WTC11 (cell line): ENCODE measurements at regions of chr12 and their contacts with region 1.

Region 1: GRCh38 chr12:131159660-131160059 is 206.0 kb downstream of the ADGRD1 start:
- DNase-seq: no peak
- ATAC-seq: peak; percentile 94
- H3K4me3 Mint-ChIP-seq: no peak overlapping the region
- H3K27ac Mint-ChIP-seq: no peak overlapping the region
- H3K4me1 Mint-ChIP-seq: 0 out of 2 replicates have a peak, but pooled peaks cover 3% of the 10 kb centered on the region
- H3K27me3 Mint-ChIP-seq: no peaks in the 10 kb centered on the region
- CTCF ChIP-seq: 0 out of 2 replicates have a peak, but pooled peaks have one; percentile 24

Region 2: DNA sequence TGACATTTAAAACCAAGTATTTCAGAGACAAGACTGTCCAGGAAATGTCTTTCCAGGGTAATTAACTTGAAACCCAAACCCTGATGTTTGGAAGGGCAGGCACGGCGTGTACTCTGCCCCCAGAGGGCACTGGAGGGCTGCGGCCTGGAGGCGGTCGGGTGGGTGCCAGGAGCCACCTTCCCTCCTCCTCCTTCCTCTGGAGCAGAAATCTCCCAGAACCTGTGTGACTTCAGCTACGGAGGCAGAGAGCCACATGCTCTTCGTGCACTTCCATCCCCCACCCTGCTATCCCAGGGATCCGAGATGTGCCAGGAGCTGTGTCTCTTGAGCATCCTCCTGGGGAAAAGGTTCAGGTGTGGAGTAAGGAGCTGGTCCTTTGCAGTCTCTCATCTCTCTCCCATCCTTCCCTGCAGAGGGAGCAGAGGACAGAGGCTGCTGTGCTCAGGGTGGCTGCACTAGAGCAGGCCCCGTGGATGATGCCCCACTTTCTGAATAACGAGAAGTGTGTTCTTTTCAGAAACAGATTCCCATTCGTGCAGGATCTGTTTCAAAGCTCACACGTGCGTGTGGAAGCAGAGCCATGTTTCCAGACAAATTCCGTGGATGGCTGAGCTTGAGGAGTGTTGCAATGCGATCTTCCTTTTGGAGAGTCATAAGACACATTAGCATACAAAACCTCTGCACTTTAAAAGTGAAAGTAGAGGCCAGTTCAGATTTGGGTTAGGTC is 43.1 kb before region 1 on chr12:
- CTCF ChIA-PET with region 1: interaction called, 13 read pairs
- POLR2A ChIA-PET with region 1: no interaction called
- DNase-seq: peak; percentile 64
- ATAC-seq: peak; percentile 85
- H3K4me3 Mint-ChIP-seq: no peak overlapping the region
- H3K27ac Mint-ChIP-seq: no peak overlapping the region
- H3K4me1 Mint-ChIP-seq: peaks cover 13% of the 10 kb centered on the region
- H3K27me3 Mint-ChIP-seq: 0 out of 2 replicates have a peak, but pooled peaks cover 4% of the 10 kb centered on the region
- CTCF ChIP-seq: no peak

Region 3: DNA sequence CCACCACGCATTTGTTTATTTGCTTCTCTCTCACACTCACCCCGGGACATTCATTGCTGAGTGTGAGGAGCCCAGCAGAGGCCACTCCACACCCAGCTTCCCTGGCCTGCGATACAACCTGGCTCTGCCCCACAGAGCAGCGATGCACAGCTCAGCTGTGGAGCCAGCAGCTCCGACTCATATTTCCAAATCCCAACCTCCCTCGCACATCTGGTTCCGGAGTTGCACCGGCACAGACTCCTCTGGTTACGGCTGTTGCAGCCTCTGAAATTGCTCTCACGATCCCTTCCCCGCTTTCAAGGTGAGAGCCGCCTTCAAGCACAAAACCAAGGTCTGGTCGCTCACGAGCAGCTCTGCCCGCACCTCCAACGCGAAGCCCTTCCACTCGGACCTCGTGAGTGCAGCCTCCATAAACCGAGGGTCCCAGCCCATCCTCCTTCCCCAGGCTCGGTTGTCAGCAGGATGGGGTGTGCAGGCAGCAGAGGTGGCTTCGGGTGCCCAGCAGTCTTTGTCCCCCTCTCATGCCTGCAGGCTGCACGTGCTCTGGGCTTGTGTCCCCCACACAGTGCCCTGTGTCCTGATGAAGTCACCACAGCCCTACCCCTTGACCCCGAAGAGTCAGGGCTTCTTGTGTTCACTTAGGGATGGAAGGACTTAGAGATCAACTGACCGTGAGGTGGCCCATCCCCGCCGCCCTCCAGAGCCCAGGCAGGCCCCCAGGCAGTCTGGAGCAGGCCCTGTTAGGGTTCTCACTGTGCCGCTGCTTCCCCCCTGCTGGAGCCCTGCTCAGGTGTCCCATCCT is 21.6 kb before region 1 on chr12:
- CTCF ChIA-PET with region 1: interaction called, 16 read pairs
- POLR2A ChIA-PET with region 1: no interaction called
- DNase-seq: no peak
- ATAC-seq: peak; percentile 63
- H3K4me3 Mint-ChIP-seq: no peak overlapping the region
- H3K27ac Mint-ChIP-seq: no peak overlapping the region
- H3K4me1 Mint-ChIP-seq: peaks cover 4% of the 10 kb centered on the region
- H3K27me3 Mint-ChIP-seq: no peaks in the 10 kb centered on the region
- CTCF ChIP-seq: no peak

Region 4: GRCh38 chr12:131223791-131224225 is 64.1 kb after region 1 on chr12:
- CTCF ChIA-PET with region 1: interaction called, 20 read pairs
- POLR2A ChIA-PET with region 1: no interaction called
- DNase-seq: no peak
- ATAC-seq: no peak
- H3K4me3 Mint-ChIP-seq: no peak overlapping the region
- H3K27ac Mint-ChIP-seq: peak overlapping the region; percentile 68
- H3K4me1 Mint-ChIP-seq: peaks cover 16% of the 10 kb centered on the region
- H3K27me3 Mint-ChIP-seq: no peaks in the 10 kb centered on the region
- CTCF ChIP-seq: no peak

Region 5: DNA sequence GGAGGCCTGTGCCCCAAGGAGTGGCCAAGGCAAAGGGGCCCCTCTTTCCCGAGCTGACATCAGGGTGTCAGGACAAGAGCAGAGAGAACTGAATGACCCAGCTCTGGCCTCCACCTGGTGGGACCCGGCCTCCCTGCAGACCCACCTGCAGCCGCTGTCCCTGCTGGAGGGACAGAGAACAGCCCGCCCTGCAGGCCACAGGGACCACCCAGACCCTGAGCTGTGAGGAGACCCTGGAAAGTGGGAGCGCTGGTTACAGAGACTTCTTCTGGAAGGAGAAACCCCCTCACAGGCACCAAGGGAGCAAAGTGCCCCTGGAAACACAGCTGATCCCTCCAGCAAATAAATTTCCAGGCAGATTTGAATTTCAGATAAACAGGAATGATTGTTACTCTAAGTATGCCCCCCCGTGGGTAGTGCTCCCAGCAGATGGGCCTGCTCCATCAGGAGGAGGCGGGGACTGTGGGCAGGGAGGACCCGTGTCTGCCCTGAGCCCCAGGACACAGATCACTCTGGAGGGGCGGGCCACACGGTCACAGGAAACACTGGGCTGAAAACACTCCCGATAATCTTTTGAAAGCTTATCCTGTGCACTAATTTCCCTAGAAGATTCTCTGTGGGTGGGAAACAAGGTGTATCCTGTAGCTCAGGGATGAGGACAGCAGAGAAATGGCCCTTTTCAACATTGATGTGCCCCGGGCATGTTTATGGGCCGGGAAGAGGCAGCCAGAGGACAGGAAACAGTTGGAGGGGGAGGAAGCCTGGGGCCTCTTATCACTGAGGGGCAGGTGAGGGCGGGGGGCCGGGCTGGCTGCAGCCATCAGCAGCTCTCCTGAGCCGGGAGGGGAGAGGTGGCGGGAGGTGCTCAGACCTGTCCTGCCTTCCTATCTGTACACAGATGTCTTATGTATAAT is 70.0 kb after region 1 on chr12:
- CTCF ChIA-PET with region 1: interaction called, 20 read pairs
- POLR2A ChIA-PET with region 1: no interaction called
- DNase-seq: peak; percentile 60
- ATAC-seq: peak; percentile 79
- H3K4me3 Mint-ChIP-seq: peak overlapping the region; percentile 36
- H3K27ac Mint-ChIP-seq: peak overlapping the region; percentile 95
- H3K4me1 Mint-ChIP-seq: peaks cover 34% of the 10 kb centered on the region
- H3K27me3 Mint-ChIP-seq: no peaks in the 10 kb centered on the region; the same call in 1 of the 2 replicates
- CTCF ChIP-seq: no peak

Region 6: DNA sequence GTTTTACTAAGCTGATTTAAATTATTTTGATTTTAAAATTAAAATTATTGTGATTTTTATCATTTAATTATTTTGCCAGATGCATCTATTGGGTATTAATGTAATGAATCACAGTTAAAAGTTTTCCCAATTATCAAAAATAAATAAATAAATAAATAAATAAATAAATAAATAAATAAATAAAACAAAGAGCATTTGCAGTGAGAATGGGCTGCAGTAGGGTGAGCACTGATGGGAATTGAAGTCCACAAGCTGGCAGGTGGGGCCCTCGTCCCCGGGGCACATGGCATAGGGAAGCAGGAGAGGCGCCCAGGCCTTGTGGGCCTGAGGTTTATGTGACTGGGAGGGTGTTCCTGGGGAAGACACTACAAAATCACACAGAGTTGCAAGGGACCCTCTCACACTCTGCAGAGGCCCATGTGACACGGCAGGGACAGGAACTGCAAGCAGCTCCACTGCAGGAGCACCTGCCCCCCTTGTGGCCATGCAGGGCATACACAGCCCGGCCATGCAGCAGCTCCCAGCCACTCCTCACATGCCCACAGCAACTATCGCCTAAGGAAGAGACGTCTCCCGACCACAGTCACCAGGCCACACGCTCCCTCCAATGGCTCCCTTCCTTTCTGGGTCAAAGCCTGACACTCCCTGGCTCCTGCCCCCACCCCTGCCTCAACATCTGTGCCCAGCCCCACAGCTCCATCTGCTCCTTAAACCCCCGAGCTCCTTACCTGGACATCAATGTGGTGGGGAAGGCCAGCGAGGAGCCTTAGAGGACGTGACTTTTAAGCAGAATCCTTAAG is 295.0 kb after region 1 on chr12:
- CTCF ChIA-PET with region 1: interaction called, 19 read pairs
- POLR2A ChIA-PET with region 1: no interaction called
- DNase-seq: peak; percentile 82
- ATAC-seq: peak; percentile 89
- H3K4me3 Mint-ChIP-seq: no peak overlapping the region
- H3K27ac Mint-ChIP-seq: no peak overlapping the region
- H3K4me1 Mint-ChIP-seq: peaks cover 15% of the 10 kb centered on the region; the same call in 1 of the 2 replicates
- H3K27me3 Mint-ChIP-seq: no peaks in the 10 kb centered on the region
- CTCF ChIP-seq: peak; percentile 85